Natural killer cell (primary cell): ENCODE measurements at regions of chr7 and their contacts with region 1.

Region 1: DNA sequence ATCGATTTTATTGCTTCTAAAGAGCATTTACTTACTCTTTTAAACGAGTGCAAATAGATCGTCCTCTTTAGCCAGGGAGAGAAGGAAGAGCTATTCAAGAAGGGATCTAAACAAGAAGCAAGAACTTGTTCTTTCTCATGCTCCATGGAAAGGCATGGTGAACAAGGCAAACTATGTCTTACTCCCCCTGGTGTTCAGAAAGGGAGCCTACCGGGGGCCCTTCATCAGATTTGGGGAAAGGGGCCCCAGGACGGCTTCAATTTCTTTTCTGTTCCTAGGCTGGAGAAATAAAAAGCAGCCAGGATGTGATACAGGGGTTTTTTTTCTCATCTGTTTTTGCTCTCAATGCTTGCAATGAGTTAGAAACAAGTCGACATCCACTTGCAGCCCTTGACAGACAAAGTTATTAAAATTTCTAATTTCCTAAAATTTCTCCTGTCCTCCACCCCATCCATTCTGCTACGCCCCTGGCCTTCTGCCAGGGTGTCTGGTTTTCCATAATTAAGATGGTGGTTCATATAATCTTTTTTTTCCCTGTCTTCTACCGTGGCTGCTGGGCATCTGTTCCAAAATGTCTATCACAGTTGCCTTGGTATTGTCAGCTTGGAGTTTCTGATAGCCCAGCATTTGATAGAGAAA is 214.4 kb downstream of the CREB5 start:
- DNase-seq: peak in 1 of 2 donors; percentile 26
- ATAC-seq: no peak
- H3K4me3 ChIP-seq: no peak overlapping the region
- H3K4me3 Mint-ChIP-seq: no peak overlapping the region
- H3K27ac ChIP-seq: no peak overlapping the region
- H3K27ac Mint-ChIP-seq: no peak overlapping the region
- H3K4me1 ChIP-seq: no peaks in the 10 kb centered on the region
- H3K4me1 Mint-ChIP-seq: no peaks in the 10 kb centered on the region
- H3K27me3 ChIP-seq: no peaks in the 10 kb centered on the region
- H3K27me3 Mint-ChIP-seq: peaks cover 13 to 29% of the 10 kb centered on the region in 2 donors
- CTCF ChIP-seq: no peak

Region 2: GRCh38 chr7:28298870-28299518 is 327.7 kb before region 1 on chr7:
- intact Hi-C with region 1: loop called (anchors 5 kb)
- DNase-seq: no peak
- ATAC-seq: no peak
- H3K4me3 ChIP-seq: no peak overlapping the region
- H3K4me3 Mint-ChIP-seq: no peak overlapping the region
- H3K27ac ChIP-seq: no peak overlapping the region
- H3K27ac Mint-ChIP-seq: no peak overlapping the region
- H3K4me1 ChIP-seq: no peaks in the 10 kb centered on the region
- H3K4me1 Mint-ChIP-seq: no peaks in the 10 kb centered on the region
- H3K27me3 ChIP-seq: no peaks in the 10 kb centered on the region
- H3K27me3 Mint-ChIP-seq: peaks cover 6 to 7% of the 10 kb centered on the region in 2 donors
- CTCF ChIP-seq: no peak

Region 3: DNA sequence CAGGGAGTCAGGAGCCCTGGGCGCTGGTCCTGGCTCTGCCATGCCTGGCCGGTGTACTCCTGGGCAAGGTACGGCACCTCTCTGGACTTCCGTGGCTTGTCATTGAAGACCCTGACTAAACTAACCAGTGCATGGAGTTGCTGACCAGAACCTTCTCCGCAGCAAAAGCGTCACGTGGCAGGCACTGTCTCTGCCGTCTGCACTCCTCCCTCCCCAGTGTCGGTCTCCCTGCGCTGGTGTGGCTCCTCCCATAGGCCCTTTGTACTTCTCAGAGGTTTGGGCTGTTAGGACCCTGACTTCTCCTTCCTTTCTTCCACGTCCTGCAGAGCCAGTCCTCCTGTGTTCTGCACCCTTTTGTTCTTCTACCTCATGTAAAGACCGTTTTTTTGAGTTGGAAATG is 315.1 kb before region 1 on chr7:
- intact Hi-C with region 1: no loop called
- DNase-seq: no peak
- ATAC-seq: no peak
- H3K4me3 ChIP-seq: no peak overlapping the region
- H3K4me3 Mint-ChIP-seq: no peak overlapping the region
- H3K27ac ChIP-seq: no peak overlapping the region
- H3K27ac Mint-ChIP-seq: no peak overlapping the region
- H3K4me1 ChIP-seq: no peaks in the 10 kb centered on the region
- H3K4me1 Mint-ChIP-seq: no peaks in the 10 kb centered on the region
- H3K27me3 ChIP-seq: peaks cover 15% of the 10 kb centered on the region
- H3K27me3 Mint-ChIP-seq: peaks cover 47 to 55% of the 10 kb centered on the region in 2 donors
- CTCF ChIP-seq: no peak

Region 4: GRCh38 chr7:28685644-28686417 is 59.1 kb after region 1 on chr7:
- intact Hi-C with region 1: no loop called
- DNase-seq: peak in 1 of 2 donors; percentile 42
- ATAC-seq: peak in 2 of 3 donors; percentile 45 to 61
- H3K4me3 ChIP-seq: peak overlapping the region; percentile 8
- H3K4me3 Mint-ChIP-seq: no peak overlapping the region
- H3K27ac ChIP-seq: peak overlapping the region; percentile 28
- H3K27ac Mint-ChIP-seq: no peak overlapping the region
- H3K4me1 ChIP-seq: peaks cover 18% of the 10 kb centered on the region
- H3K4me1 Mint-ChIP-seq: no peaks in the 10 kb centered on the region
- H3K27me3 ChIP-seq: peaks cover 3% of the 10 kb centered on the region
- H3K27me3 Mint-ChIP-seq: peaks cover 18 to 34% of the 10 kb centered on the region in 2 donors
- CTCF ChIP-seq: no peak

Region 5: DNA sequence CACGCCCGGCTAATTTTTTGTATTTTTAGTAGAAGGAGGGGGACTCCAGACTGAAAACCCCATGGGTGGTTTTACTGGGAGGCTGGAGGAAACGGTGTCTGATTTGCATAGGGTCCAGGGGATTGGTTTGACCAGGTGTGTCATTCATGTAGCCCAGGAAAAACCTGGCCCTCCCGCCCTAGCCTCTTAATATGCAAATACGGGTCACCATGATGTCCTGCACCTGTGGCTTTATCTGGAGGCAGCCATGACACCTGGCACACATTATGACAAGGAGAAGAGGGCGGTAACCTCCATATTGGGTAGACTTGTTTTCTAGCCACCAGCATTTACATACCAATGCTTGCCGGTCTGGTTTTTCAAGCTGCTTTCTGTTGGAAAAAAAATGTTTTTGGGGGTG is 263.4 kb after region 1 on chr7:
- intact Hi-C with region 1: no loop called
- DNase-seq: no peak
- ATAC-seq: no peak
- H3K4me3 ChIP-seq: no peak overlapping the region
- H3K4me3 Mint-ChIP-seq: no peak overlapping the region
- H3K27ac ChIP-seq: no peak overlapping the region
- H3K27ac Mint-ChIP-seq: no peak overlapping the region
- H3K4me1 ChIP-seq: no peaks in the 10 kb centered on the region
- H3K4me1 Mint-ChIP-seq: no peaks in the 10 kb centered on the region
- H3K27me3 ChIP-seq: peaks cover 8% of the 10 kb centered on the region
- H3K27me3 Mint-ChIP-seq: peaks cover 18 to 26% of the 10 kb centered on the region in 2 donors
- CTCF ChIP-seq: no peak